Heart left ventricle (tissue), 16 donors: ENCODE measurements at regions of chr3 and their contacts with region 1.

Region 1: DNA sequence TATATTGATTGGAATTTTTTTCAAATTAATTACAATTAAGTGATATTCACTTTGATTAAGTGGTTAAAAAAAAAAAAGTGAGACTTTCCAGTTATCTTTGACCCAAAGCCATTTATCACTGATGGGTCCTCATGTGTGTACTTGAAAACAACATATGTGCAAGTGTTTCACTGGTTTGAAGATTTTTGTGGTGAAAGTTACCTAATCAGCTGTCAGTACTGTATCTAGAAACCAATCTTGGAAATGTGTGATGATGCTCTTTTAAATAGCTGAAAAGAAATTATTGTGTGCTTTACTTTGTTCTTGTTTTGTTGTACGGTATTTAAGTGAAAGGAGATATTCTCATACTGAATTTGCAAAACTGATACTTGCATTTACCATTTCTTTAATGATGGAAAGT is 11.6 kb upstream of the XCR1 start:
- DNase-seq: no peak
- ATAC-seq: no peak
- H3K4me3 ChIP-seq: no peak overlapping the region
- H3K27ac ChIP-seq: no peak overlapping the region
- H3K4me1 ChIP-seq: no peaks in the 10 kb centered on the region
- H3K27me3 ChIP-seq: no peaks in the 10 kb centered on the region
- CTCF ChIP-seq: no peak
- POLR2A ChIP-seq: no peak

Region 2: DNA sequence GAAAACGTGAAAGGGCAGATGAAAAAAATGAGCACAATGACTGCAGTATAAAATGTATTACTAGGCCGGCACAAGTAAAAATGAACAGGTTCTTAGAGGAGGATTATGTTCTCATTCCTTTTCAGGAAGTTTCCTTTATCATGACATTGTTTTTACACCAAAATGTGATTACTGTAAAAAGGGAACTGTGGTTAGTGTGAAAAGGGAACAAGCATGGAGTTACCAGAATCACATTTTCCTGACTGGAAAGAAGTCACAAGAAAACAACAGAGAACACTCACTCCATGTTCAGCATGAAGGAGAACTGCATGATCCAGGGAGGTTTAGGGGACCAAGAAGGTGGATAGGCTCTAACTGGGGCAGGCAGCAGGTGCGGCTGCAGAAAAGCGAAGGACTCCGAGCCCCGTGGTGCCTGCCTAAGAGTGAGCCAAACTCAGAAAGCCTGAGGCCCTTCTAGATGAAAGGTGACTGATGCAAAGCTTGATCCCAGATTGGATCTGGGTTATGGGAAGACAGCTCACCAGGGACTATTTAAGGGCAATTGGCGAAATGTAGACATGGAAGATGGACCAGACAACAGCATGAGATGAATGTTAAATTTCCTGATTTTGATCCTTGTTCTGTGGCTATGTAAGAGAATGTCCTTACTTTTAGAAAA is 91.8 kb after region 1 on chr3:
- intact Hi-C with region 1: loop called in 1 of 10 experiments (anchors 5 kb)
- DNase-seq: no peak
- ATAC-seq: peak in 2 of 4 donors; percentile 65 to 67
- H3K4me3 ChIP-seq: no peak overlapping the region
- H3K27ac ChIP-seq: peak overlapping the region in 3 of 12 donors; percentile 11 to 91 (median 34)
- H3K4me1 ChIP-seq: peaks cover 0 to 71% (median 0%) of the 10 kb centered on the region in 12 donors
- H3K27me3 ChIP-seq: no peaks in the 10 kb centered on the region
- CTCF ChIP-seq: no peak
- POLR2A ChIP-seq: no peak